Activated CD8-positive, alpha-beta memory T cell treated with anti-CD3 and anti-CD28 coated beads, Interleukin-2, amount 10 ng/mL, durations not matched to agents 7 days and 5 days (primary cell): ENCODE measurements at regions of chr10 and their contacts with region 1.

Region 1: GRCh38 chr10:110600487-110601101 is 33.1 kb downstream of the SMC3 start:
- DNase-seq: peak; percentile 55
- ATAC-seq: peak; percentile 71
- H3K4me3 Mint-ChIP-seq: no peak overlapping the region
- H3K27ac Mint-ChIP-seq: peak overlapping the region; percentile 11
- H3K4me1 Mint-ChIP-seq: peaks cover 1% of the 10 kb centered on the region
- H3K27me3 Mint-ChIP-seq: no peaks in the 10 kb centered on the region

Region 2: GRCh38 chr10:110584006-110584405 is 16.6 kb before region 1 on chr10:
- CTCF ChIA-PET with region 1: interaction called, 23 read pairs
- DNase-seq: no peak
- ATAC-seq: no peak
- H3K4me3 Mint-ChIP-seq: no peak overlapping the region
- H3K27ac Mint-ChIP-seq: no peak overlapping the region
- H3K4me1 Mint-ChIP-seq: no peaks in the 10 kb centered on the region
- H3K27me3 Mint-ChIP-seq: no peaks in the 10 kb centered on the region

Region 3: DNA sequence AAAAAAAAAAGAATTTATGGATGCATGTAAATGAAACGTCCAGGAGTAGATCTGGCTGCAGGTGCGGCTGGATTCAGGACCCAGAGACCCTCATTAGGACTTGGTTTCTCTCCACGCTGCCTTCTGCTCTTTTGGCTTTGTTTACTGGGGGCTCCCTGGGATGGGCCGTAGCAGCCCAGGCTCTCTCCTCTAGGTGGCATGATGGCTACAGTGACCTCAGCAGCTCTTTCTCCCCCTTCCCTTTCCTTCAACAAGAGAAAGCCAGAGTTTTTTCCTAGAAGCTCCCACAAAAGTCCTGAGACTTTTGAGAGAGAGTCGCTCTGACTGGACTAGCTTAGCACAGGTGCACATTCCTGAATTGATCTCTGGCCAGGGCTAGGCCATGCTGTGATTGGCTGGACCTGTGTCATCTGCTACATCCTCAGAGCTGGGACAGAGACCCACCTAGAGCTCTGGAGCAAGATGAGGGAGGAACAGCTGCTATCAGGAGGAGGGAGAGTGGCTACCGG is 203.3 kb after region 1 on chr10:
- CTCF ChIA-PET with region 1: no interaction called
- DNase-seq: peak; percentile 65
- ATAC-seq: peak; percentile 79
- H3K4me3 Mint-ChIP-seq: no peak overlapping the region
- H3K27ac Mint-ChIP-seq: peak overlapping the region; percentile 68
- H3K4me1 Mint-ChIP-seq: peaks cover 29% of the 10 kb centered on the region
- H3K27me3 Mint-ChIP-seq: no peaks in the 10 kb centered on the region